ENCODE measurements at regions of chr1 and their contacts with region 1.

Region 1: GRCh38 chr1:2314803-2315673 is 76.3 kb downstream of the MORN1 start:
- DNase-seq: peak; percentile 68
- ATAC-seq: peak; percentile 2
- H3K4me3 Mint-ChIP-seq: no peak overlapping the region
- H3K27ac Mint-ChIP-seq: no peak overlapping the region
- H3K4me1 Mint-ChIP-seq: peaks cover 8% of the 10 kb centered on the region
- H3K27me3 Mint-ChIP-seq: no peaks in the 10 kb centered on the region; the same call in 1 of the 2 replicates
- CTCF ChIP-seq: peak; percentile 100

Region 2: DNA sequence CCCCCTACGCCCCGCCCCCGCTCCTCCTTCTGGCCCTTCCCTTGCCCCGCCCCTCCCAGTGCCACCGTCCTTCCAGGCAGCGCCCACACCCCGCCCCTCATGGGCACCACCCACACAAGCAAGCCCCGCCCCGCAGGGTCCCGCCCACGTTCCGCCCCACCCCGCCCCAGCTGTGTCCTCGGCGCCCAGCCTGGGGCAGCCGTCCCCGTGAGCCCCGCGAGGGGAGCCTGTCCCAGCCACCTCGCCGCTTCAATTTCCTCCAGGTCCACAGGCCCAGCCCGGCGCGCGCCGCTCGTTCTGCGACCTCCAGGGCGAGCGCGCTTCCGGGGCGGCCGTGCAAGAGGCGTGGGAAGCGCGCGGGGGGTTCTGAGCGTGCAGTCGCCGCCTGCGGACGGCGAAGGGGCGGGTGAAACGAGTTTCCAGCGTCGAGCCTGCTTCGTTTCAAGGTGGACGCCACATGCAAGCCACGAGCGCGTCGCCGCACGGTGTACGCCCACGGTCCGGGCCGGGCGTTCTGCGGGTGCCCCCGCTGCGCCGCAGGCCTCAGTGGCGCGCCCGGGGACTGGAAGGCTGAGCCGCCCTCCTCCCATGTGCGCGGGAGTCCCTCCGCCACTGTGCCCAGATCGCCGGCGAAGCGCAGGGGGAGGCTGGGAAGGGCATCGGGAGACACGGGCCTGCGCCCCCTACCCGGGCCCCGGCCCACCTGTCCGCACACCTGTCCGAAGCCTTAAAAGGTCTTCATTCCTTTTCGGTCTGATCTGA is 109.7 kb before region 1 on chr1:
- CTCF ChIA-PET with region 1: interaction called, 16 read pairs
- POLR2A ChIA-PET with region 1: interaction called, 3 read pairs
- DNase-seq: peak; percentile 97
- ATAC-seq: peak; percentile 82
- H3K4me3 Mint-ChIP-seq: peak overlapping the region; percentile 55
- H3K27ac Mint-ChIP-seq: no peak overlapping the region
- H3K4me1 Mint-ChIP-seq: peaks cover 16% of the 10 kb centered on the region
- H3K27me3 Mint-ChIP-seq: peaks cover 15% of the 10 kb centered on the region
- CTCF ChIP-seq: no peak

Region 3: DNA sequence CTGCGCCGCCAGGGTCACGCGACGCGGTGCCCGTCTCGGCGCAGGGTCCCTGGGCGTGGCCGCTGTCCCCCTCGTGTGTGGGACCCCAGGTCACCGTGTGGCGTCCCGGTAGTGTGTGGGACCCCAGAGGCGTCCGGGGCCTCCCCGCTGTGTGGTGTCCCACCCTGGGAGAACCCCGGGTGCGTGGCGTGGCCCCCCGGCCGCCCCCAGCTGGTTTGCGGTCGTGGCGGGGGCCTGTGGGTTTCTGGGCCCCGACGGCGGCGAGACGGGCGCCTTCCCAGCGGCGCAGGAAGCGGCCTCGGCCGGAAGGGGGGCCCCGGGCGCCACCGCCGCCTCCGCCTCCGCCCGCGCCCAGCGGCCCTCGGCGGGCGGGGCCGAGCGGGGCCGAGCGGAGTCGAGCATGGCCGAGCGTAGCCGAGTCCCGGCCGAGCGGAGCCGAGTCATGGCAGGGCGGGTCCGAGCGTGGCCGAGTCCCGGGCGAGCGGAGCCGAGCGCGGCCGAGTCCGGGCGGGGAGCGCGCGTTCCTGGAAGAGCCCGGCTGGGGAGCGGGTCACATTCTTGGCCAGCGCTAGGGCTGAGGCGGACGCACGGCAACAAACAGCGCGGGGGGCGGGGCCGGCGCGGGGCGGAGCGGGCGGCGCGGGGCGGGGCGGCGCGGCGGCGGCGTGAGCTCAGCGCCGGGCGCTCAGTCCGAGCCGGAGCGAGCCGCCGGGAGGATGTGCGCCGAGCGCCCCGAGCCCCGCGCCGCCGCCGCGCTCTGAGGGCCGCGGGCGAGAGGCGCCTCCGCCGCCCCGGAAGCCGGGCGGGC is 87.5 kb before region 1 on chr1:
- CTCF ChIA-PET with region 1: interaction called, 28 read pairs
- POLR2A ChIA-PET with region 1: interaction called, 3 read pairs
- DNase-seq: peak; percentile 95
- ATAC-seq: peak; percentile 95
- H3K4me3 Mint-ChIP-seq: peak overlapping the region; percentile 37; the same call in 1 of the 2 replicates
- H3K27ac Mint-ChIP-seq: no peak overlapping the region
- H3K4me1 Mint-ChIP-seq: peaks cover 30% of the 10 kb centered on the region
- H3K27me3 Mint-ChIP-seq: no peaks in the 10 kb centered on the region
- CTCF ChIP-seq: no peak

Region 4: GRCh38 chr1:2233997-2234761 is 80.9 kb before region 1 on chr1:
- CTCF ChIA-PET with region 1: interaction called, 28 read pairs
- POLR2A ChIA-PET with region 1: interaction called, 3 read pairs
- DNase-seq: no peak
- ATAC-seq: no peak
- H3K4me3 Mint-ChIP-seq: no peak overlapping the region
- H3K27ac Mint-ChIP-seq: peak overlapping the region; percentile 80
- H3K4me1 Mint-ChIP-seq: peaks cover 66% of the 10 kb centered on the region
- H3K27me3 Mint-ChIP-seq: no peaks in the 10 kb centered on the region
- CTCF ChIP-seq: no peak

Region 5: GRCh38 chr1:2240270-2241156 is 74.5 kb before region 1 on chr1:
- CTCF ChIA-PET with region 1: interaction called, 10 read pairs
- POLR2A ChIA-PET with region 1: no interaction called
- DNase-seq: no peak
- ATAC-seq: no peak
- H3K4me3 Mint-ChIP-seq: no peak overlapping the region
- H3K27ac Mint-ChIP-seq: peak overlapping the region; percentile 86; the same call in 1 of the 2 replicates
- H3K4me1 Mint-ChIP-seq: peaks cover 41% of the 10 kb centered on the region
- H3K27me3 Mint-ChIP-seq: no peaks in the 10 kb centered on the region
- CTCF ChIP-seq: no peak

Measured in WTC11 (cell line).